B cell (primary cell): ENCODE measurements at regions of chr4 and their contacts with region 1.

Region 1: GRCh38 chr4:107736924-107737448 is 17.0 kb upstream of the PAPSS1 start:
- DNase-seq: peak; percentile 70
- ATAC-seq: peak; percentile 64
- H3K4me3 ChIP-seq: no peak overlapping the region
- H3K4me3 Mint-ChIP-seq: no peak overlapping the region
- H3K27ac ChIP-seq: no peak overlapping the region
- H3K27ac Mint-ChIP-seq: no peak overlapping the region
- H3K4me1 ChIP-seq: no peaks in the 10 kb centered on the region
- H3K4me1 Mint-ChIP-seq: no peaks in the 10 kb centered on the region
- H3K27me3 ChIP-seq: peaks cover 0 to 2% (median 0%) of the 10 kb centered on the region in 4 experiments
- H3K27me3 Mint-ChIP-seq: peaks cover 13% of the 10 kb centered on the region
- CTCF ChIP-seq: peak; percentile 90

Region 2: DNA sequence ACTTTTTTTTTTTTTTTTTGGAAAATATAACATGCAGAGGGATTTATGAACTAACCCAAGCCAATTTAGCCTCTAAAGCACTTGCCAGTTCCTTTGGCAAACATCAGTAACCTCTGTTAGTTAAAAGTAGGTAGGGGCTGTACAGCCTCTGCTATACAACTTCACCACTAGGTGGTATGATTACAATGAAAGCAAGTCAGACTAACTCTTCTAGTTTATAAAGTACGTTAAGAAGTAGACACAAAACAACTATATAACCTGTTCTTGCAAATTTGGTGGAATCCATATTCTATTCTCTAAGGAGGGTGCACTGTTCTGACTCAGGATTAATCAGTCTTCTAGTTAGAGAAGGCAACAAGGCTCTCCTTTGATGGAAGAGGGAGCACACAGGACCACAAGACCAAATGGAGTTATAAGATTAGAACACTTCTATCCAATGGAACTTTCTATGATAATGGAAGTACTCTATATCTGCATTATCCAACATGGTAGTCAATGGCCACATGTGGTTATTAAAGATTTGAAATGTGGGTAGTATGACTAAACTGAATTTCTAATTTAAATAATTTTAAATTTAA is 1407.9 kb before region 1 on chr4:
- CTCF ChIA-PET with region 1: interaction called, 3 read pairs
- POLR2A ChIA-PET with region 1: no interaction called
- intact Hi-C with region 1: loop called (anchors 1 kb)
- DNase-seq: peak; percentile 29
- ATAC-seq: peak; percentile 28
- H3K4me3 ChIP-seq: no peak overlapping the region
- H3K4me3 Mint-ChIP-seq: no peak overlapping the region
- H3K27ac ChIP-seq: no peak overlapping the region
- H3K27ac Mint-ChIP-seq: no peak overlapping the region
- H3K4me1 ChIP-seq: no peaks in the 10 kb centered on the region
- H3K4me1 Mint-ChIP-seq: no peaks in the 10 kb centered on the region
- H3K27me3 ChIP-seq: no peaks in the 10 kb centered on the region
- H3K27me3 Mint-ChIP-seq: no peaks in the 10 kb centered on the region
- CTCF ChIP-seq: peak; percentile 69

Region 3: GRCh38 chr4:107183155-107183774 is 553.7 kb before region 1 on chr4:
- CTCF ChIA-PET with region 1: interaction called, 3 read pairs
- POLR2A ChIA-PET with region 1: no interaction called
- intact Hi-C with region 1: loop called (anchors 10 kb)
- DNase-seq: peak; percentile 13
- ATAC-seq: no peak
- H3K4me3 ChIP-seq: no peak overlapping the region
- H3K4me3 Mint-ChIP-seq: no peak overlapping the region
- H3K27ac ChIP-seq: no peak overlapping the region
- H3K27ac Mint-ChIP-seq: no peak overlapping the region
- H3K4me1 ChIP-seq: no peaks in the 10 kb centered on the region
- H3K4me1 Mint-ChIP-seq: no peaks in the 10 kb centered on the region
- H3K27me3 ChIP-seq: no peaks in the 10 kb centered on the region
- H3K27me3 Mint-ChIP-seq: no peaks in the 10 kb centered on the region
- CTCF ChIP-seq: peak; percentile 66

Region 4: DNA sequence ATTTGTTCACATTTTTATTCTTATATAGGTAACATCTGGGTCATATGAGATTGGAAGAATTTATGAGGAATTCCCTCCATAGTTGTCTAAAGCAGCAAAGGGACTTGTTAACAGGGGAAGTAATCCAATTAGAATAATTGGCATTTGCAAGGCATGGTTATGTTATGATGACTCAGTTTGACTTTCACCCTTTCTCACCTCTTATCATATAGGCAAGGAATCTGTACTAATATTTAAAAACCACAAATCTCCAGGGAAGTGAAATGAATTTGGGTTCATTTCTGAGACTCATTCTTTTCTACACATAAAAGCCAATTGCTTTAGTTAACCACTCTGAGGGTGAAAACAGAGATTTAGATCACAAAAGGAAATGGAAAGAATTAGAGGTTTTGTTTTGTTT is 419.4 kb before region 1 on chr4:
- CTCF ChIA-PET with region 1: no interaction called
- POLR2A ChIA-PET with region 1: no interaction called
- intact Hi-C with region 1: no loop called
- DNase-seq: no peak
- ATAC-seq: no peak
- H3K4me3 ChIP-seq: no peak overlapping the region
- H3K4me3 Mint-ChIP-seq: no peak overlapping the region
- H3K27ac ChIP-seq: no peak overlapping the region
- H3K27ac Mint-ChIP-seq: no peak overlapping the region
- H3K4me1 ChIP-seq: no peaks in the 10 kb centered on the region
- H3K4me1 Mint-ChIP-seq: no peaks in the 10 kb centered on the region
- H3K27me3 ChIP-seq: no peaks in the 10 kb centered on the region
- H3K27me3 Mint-ChIP-seq: no peaks in the 10 kb centered on the region
- CTCF ChIP-seq: no peak

Region 5: GRCh38 chr4:107552306-107552705 is 184.7 kb before region 1 on chr4:
- CTCF ChIA-PET with region 1: interaction called, 4 read pairs
- POLR2A ChIA-PET with region 1: no interaction called
- intact Hi-C with region 1: loop called (anchors 10 kb)
- DNase-seq: no peak
- ATAC-seq: no peak
- H3K4me3 ChIP-seq: no peak overlapping the region
- H3K4me3 Mint-ChIP-seq: no peak overlapping the region
- H3K27ac ChIP-seq: no peak overlapping the region
- H3K27ac Mint-ChIP-seq: no peak overlapping the region
- H3K4me1 ChIP-seq: no peaks in the 10 kb centered on the region
- H3K4me1 Mint-ChIP-seq: no peaks in the 10 kb centered on the region
- H3K27me3 ChIP-seq: no peaks in the 10 kb centered on the region
- H3K27me3 Mint-ChIP-seq: no peaks in the 10 kb centered on the region
- CTCF ChIP-seq: no peak

Region 6: GRCh38 chr4:107719922-107720722 is 16.9 kb before region 1 on chr4 and contains the start of gene PAPSS1:
- CTCF ChIA-PET with region 1: interaction called, 26 read pairs
- POLR2A ChIA-PET with region 1: no interaction called
- intact Hi-C with region 1: no loop called
- DNase-seq: peak; percentile 99
- ATAC-seq: peak; percentile 85
- H3K4me3 ChIP-seq: peak within 1 kb of the TSS; percentile 68 to 93 (median 90)
- H3K4me3 Mint-ChIP-seq: peak within 1 kb of the TSS; percentile 99
- H3K27ac ChIP-seq: peak within 1 kb of the TSS; percentile 50 to 75
- H3K27ac Mint-ChIP-seq: peak within 1 kb of the TSS; percentile 97
- H3K4me1 ChIP-seq: peaks cover 22 to 26% of the 10 kb centered on the region in 2 donors
- H3K4me1 Mint-ChIP-seq: peaks cover 39% of the 10 kb centered on the region
- H3K27me3 ChIP-seq: no peaks in the 10 kb centered on the region
- H3K27me3 Mint-ChIP-seq: no peaks in the 10 kb centered on the region
- CTCF ChIP-seq: no peak
- total RNA-seq, gene PAPSS1: 31.5 and 33.9 TPM in 2 replicates

Region 7: DNA sequence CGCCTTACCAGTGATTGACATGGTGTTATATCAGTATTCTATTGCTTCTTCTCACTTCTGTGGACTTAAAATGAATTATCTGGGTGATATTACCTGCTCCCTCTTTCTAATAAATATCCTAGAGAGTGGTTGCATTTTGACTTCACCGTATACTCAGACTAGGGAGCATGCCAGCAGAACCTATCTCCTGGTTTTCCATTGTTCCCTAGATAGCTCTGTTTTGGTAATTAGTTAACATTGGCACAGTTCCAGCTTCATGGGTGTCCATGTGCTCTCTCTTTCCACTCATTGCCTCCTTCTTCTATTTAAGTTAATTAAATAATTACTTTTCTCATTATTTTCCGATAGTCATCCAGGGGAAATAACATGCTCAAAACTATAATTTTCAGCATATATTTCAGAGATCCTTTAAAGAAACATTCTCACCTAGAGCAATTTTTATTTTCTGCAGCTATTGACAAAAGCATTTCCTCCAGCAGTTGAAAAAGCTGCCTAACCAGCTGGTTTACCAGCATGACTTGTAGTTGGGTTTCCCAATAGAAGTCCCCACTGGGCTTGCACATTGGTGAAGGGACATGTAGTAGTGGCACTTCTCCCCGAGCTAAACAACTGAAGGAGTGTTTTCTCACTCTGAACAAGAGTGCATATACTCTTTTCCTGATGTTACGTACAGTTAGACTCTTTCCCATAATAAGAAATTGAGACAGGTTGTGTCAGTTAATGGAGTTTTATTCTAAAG is 10.9 kb after region 1 on chr4:
- CTCF ChIA-PET with region 1: interaction called, 19 read pairs
- POLR2A ChIA-PET with region 1: no interaction called
- intact Hi-C with region 1: no loop called
- DNase-seq: no peak
- ATAC-seq: no peak
- H3K4me3 ChIP-seq: no peak overlapping the region
- H3K4me3 Mint-ChIP-seq: no peak overlapping the region
- H3K27ac ChIP-seq: no peak overlapping the region
- H3K27ac Mint-ChIP-seq: no peak overlapping the region
- H3K4me1 ChIP-seq: no peaks in the 10 kb centered on the region
- H3K4me1 Mint-ChIP-seq: no peaks in the 10 kb centered on the region
- H3K27me3 ChIP-seq: peaks cover 0 to 26% (median 7%) of the 10 kb centered on the region in 4 experiments
- H3K27me3 Mint-ChIP-seq: peaks cover 38% of the 10 kb centered on the region
- CTCF ChIP-seq: no peak